Stomach (tissue), 19 donors: ENCODE measurements at regions of chr4 and their contacts with region 1.

Region 1: GRCh38 chr4:94127707-94128328 is 79.8 kb upstream of the SMARCAD1 start:
- DNase-seq: peak in 1 of 2 donors; percentile 48
- H3K4me3 ChIP-seq: no peak overlapping the region
- H3K27ac ChIP-seq: no peak overlapping the region
- H3K4me1 ChIP-seq: no peaks in the 10 kb centered on the region
- H3K27me3 ChIP-seq: peaks cover 0 to 3% (median 0%) of the 10 kb centered on the region in 3 donors
- CTCF ChIP-seq: peak in 5 of 7 experiments; percentile 23 to 51 (median 45)
- EP300 ChIP-seq: no peak
- POLR2A ChIP-seq: no peak

Region 2: DNA sequence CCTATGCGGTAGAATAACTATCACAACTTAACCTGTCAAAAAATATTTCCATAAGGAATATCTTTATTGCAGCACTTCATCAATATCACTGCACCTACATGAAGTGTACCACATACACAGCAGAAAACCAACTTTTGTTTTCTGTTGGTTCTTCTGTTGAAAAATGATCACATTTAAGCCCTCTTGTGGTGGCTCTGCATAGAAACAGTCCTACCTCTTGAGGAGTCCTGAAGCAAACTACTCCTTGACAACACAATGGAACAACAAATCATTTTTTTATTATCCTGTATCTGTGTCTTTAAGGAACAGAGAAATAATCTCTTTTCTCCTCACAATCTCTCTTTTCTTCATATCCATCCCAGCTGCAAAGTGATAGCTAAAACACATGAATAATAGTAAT is 339.1 kb before region 1 on chr4:
- intact Hi-C with region 1: loop called (anchors 10 kb)
- DNase-seq: peak in 1 of 2 donors; percentile 30
- H3K4me3 ChIP-seq: no peak overlapping the region
- H3K27ac ChIP-seq: no peak overlapping the region
- H3K4me1 ChIP-seq: no peaks in the 10 kb centered on the region
- H3K27me3 ChIP-seq: peaks cover 0 to 4% (median 0%) of the 10 kb centered on the region in 3 donors
- CTCF ChIP-seq: peak in 1 of 7 experiments; percentile 10
- EP300 ChIP-seq: no peak
- POLR2A ChIP-seq: no peak

Region 3: GRCh38 chr4:94000563-94000962 is 127.3 kb before region 1 on chr4:
- intact Hi-C with region 1: no loop called
- DNase-seq: no peak
- H3K4me3 ChIP-seq: no peak overlapping the region
- H3K27ac ChIP-seq: no peak overlapping the region
- H3K4me1 ChIP-seq: no peaks in the 10 kb centered on the region
- H3K27me3 ChIP-seq: no peaks in the 10 kb centered on the region
- CTCF ChIP-seq: no peak
- EP300 ChIP-seq: no peak
- POLR2A ChIP-seq: no peak